Cardiac septum (tissue), 1 donor: ENCODE measurements at regions of chr4 and their contacts with region 1.

Region 1: GRCh38 chr4:69167300-69167699 is 47.2 kb downstream of the UGT2B11 start:
- DNase-seq: no peak

Region 2: DNA sequence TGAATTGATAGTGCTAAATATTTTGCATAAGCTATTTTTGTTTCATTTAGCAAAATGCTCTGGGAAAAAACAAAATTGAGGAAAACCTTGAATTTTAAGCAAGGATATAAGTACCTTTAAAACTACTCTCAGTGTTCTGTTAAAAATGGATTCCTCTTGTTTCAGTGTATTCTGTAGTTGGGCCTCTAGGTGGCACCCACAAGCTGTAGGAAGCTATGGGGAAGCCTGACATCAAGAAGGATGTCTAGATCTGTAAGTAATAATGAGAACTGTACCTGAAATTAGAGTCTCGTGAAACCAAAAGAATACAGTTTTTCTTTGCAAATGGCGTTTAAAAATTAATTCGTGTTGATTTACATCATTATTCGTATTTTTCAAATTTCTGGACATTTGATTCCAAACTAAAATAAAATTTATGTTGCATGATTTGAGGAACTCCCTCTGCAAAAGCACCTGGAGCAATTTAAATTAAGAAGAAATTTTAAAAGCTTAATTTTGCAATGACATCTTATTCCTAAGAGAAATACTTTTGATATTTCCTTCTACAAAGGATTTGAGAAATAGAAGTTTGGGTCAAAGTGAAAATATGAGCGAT is 668.8 kb before region 1 on chr4:
- intact Hi-C with region 1: loop called (anchors 5 kb)
- DNase-seq: no peak